ENCODE measurements at regions of chr1 and their contacts with region 1.

Region 1: GRCh38 chr1:40404670-40405462 is 31.3 kb downstream of the SMAP2 start:
- DNase-seq: peak; percentile 70
- H3K4me3 ChIP-seq: no peak overlapping the region
- H3K27ac ChIP-seq: no peak overlapping the region
- H3K4me1 ChIP-seq: peaks cover 18% of the 10 kb centered on the region
- H3K27me3 ChIP-seq: no peaks in the 10 kb centered on the region
- CTCF ChIP-seq: peak; percentile 86

Region 2: DNA sequence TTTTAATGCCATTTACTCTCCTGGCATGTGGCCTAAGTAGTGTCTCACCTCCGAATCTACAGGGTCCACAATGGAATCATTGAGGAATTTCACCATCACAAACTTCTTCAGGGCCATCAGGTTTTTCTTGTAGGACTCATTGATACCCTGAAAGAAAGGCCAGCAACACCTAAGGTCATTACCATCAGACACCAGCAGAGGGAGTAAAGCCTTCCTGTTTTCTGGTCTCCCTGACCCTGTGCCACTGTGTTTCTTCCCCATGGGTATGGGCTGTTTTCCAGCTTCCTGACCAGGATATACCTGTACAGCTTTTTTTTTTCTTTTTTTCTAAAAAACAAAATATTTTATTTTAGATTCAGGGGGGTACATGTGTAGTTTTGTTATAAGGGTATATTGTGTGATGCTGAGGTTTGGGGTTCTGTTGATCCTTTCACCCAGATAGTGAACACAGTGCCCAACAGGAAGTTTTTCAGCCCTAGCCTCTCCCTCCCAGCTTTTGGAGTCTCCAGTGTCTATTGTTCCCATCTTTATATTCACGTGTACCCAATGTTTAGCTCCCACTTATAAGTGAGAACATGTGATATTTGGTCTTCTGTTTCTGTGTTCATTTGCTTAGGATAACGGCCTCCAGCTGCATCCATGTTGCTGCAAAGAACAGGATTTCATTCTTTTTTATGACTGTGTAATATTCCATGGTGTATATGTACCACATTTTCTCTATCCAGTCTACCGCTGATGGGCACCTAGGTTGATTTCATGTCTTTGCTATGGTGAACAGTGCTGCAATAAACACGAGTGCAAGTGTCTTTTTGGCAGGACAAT is 326.1 kb before region 1 on chr1:
- CTCF ChIA-PET with region 1: no interaction called
- POLR2A ChIA-PET with region 1: no interaction called
- intact Hi-C with region 1: loop called (anchors 10 kb)
- DNase-seq: peak; percentile 76
- H3K4me3 ChIP-seq: no peak overlapping the region
- H3K27ac ChIP-seq: no peak overlapping the region
- H3K4me1 ChIP-seq: no peaks in the 10 kb centered on the region
- H3K27me3 ChIP-seq: no peaks in the 10 kb centered on the region
- CTCF ChIP-seq: peak; percentile 82

Region 3: DNA sequence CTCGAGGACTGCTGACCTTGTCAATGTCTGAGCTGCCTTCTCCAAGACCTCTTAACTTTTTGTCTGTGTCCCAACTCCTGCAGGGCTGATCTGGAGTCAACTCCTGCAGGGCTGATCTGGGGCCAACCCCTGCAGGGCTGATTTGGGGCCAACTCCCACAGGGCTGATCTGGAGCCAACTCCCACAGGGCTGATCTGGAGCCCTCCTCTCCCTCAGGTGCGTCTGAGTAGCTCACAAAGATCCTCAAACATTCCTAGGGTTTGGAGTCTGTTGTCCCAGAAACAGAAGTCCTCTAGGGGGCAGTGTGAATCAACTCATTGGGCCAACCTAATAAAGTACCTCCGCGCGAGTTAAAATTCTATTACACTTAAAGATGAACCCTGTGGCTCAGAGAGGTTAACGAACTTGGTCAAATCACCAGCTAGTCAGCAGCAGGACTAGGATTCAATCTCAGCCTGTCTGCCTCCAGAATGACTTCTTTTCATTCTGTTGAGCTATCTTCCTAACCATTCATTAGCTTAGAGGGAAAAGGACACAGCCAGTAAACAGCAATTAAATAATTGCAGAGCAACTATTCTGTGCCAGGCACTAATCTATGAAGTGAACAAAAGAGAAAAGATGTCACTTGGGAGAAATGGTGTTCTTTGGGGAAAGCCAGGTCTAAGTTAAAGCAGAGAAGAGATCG is 260.8 kb before region 1 on chr1:
- CTCF ChIA-PET with region 1: interaction called, 18 read pairs
- POLR2A ChIA-PET with region 1: no interaction called
- intact Hi-C with region 1: no loop called
- DNase-seq: peak; percentile 84
- H3K4me3 ChIP-seq: no peak overlapping the region
- H3K27ac ChIP-seq: no peak overlapping the region
- H3K4me1 ChIP-seq: no peaks in the 10 kb centered on the region
- H3K27me3 ChIP-seq: peaks cover 31% of the 10 kb centered on the region
- CTCF ChIP-seq: peak; percentile 85

Region 4: DNA sequence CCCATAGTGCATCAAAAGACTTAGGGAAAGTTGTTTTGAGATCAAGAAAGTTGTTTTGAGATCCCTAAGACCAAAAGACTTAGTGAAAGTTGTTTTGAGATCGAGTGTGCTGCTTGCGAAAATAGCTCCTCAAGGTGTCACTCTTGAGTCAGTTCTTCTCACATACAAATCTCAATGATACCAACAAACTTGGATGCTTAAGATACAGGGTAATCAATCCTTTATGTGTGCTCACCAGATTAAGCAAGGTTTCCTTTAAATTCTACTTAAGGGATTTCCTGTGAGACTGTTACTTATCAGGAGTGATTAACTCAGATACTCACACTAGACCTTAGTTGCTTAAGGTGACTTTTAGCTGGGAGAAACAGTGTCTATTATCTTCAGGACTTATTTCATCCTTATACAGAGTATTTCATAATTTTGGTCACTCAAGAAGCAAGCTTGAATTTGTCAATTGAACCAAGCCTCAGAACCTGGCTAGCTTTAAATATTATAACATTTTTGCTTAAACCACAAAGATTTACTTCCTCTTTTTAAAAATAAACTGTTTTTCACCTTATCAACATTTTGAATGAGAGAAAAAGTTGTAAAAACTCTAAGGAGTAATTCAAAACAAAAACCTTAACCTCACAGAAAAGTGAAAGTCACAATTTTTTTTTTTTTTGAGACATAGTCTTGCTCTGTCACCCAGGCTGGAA is 251.6 kb before region 1 on chr1:
- CTCF ChIA-PET with region 1: interaction called, 25 read pairs
- POLR2A ChIA-PET with region 1: no interaction called
- intact Hi-C with region 1: loop called (anchors 1 kb)
- DNase-seq: peak; percentile 71
- H3K4me3 ChIP-seq: peak overlapping the region; percentile 18
- H3K27ac ChIP-seq: no peak overlapping the region
- H3K4me1 ChIP-seq: peaks cover 5% of the 10 kb centered on the region
- H3K27me3 ChIP-seq: peaks cover 2% of the 10 kb centered on the region
- CTCF ChIP-seq: peak; percentile 81

Region 5: GRCh38 chr1:40197656-40198055 is 207.2 kb before region 1 on chr1:
- CTCF ChIA-PET with region 1: no interaction called
- POLR2A ChIA-PET with region 1: no interaction called
- intact Hi-C with region 1: no loop called
- DNase-seq: no peak
- H3K4me3 ChIP-seq: no peak overlapping the region
- H3K27ac ChIP-seq: no peak overlapping the region
- H3K4me1 ChIP-seq: no peaks in the 10 kb centered on the region
- H3K27me3 ChIP-seq: no peaks in the 10 kb centered on the region
- CTCF ChIP-seq: 0 out of 2 replicates have a peak, but pooled peaks have one; percentile 19

Region 6: GRCh38 chr1:40257688-40258444 is 147.0 kb before region 1 on chr1 and contains the start of gene ZMPSTE24:
- CTCF ChIA-PET with region 1: no interaction called
- POLR2A ChIA-PET with region 1: no interaction called
- intact Hi-C with region 1: loop called (anchors 10 kb)
- DNase-seq: peak; percentile 99
- H3K4me3 ChIP-seq: peak within 1 kb of the TSS; percentile 83
- H3K27ac ChIP-seq: peak within 1 kb of the TSS; percentile 97
- H3K4me1 ChIP-seq: peaks cover 7% of the 10 kb centered on the region
- H3K27me3 ChIP-seq: no peaks in the 10 kb centered on the region
- CTCF ChIP-seq: no peak
- total RNA-seq, gene ZMPSTE24: 57.5 and 72.1 TPM in 2 replicates

Region 7: DNA sequence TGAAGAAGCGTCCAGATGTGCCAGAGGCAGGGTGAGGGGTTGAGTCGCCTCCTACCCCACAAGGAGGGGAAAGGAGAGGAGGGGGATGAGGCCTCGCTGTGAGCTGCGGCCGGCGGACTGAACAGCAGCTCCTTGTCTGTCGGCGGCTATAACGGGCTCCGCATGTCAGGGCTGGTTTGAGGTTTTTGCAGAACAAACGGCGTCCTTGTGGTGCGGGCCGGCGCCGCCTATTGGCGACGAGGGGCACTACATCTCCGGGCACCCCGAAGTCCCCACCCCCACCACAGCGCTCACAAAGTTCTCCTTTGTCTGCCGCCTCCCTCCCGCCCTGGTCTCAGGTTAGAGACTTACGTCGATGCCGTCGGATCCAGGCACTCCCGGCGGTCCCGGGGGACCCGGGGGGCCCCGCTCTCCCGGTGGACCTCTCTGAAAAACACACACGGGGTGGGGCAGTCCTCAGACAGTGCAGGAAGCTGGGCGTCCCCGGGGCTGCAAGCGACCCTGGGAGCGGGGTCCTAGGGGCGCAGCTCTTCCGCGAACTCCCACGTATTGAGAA is 89.5 kb before region 1 on chr1:
- CTCF ChIA-PET with region 1: interaction called, 3 read pairs
- POLR2A ChIA-PET with region 1: no interaction called
- intact Hi-C with region 1: loop called (anchors 5 kb)
- DNase-seq: peak; percentile 92
- H3K4me3 ChIP-seq: peak overlapping the region; percentile 56
- H3K27ac ChIP-seq: peak overlapping the region; percentile 43
- H3K4me1 ChIP-seq: peaks cover 12% of the 10 kb centered on the region
- H3K27me3 ChIP-seq: no peaks in the 10 kb centered on the region
- CTCF ChIP-seq: peak; percentile 90

Region 8: DNA sequence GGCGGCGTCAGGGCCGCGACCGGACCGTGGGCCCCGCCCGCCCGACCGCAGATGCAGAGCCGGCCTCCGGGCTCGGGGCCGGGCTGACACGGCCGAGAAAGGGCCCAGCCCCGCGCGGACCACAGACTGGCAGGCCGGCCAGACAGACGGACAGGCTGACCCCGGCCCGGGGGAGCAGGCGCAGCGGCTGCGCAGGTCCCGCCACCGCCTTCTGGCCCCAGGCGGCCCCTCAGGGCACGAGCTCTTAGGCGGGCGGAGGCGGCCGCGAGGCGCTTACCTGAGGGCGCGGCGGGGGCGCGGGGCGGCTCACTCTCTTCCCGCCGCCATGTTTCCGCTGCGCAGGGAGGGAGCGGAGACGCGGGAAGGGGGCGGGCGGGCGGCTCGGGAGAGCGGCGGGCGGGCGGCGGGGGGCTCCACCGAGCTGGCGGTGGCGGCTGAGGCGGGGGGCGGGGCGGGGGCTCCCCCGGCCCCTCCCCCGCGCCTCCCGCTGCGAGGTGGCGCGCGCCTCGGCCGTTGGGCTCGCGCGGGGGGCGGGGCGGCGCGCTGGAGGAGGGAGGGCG is 837.0 kb after region 1 on chr1 and contains the start of gene SCMH1:
- CTCF ChIA-PET with region 1: no interaction called
- POLR2A ChIA-PET with region 1: no interaction called
- intact Hi-C with region 1: no loop called
- DNase-seq: peak; percentile 72
- H3K4me3 ChIP-seq: peak within 1 kb of the TSS; percentile 78
- H3K27ac ChIP-seq: peak within 1 kb of the TSS; percentile 87
- H3K4me1 ChIP-seq: peaks cover 37% of the 10 kb centered on the region
- H3K27me3 ChIP-seq: no peaks in the 10 kb centered on the region
- CTCF ChIP-seq: no peak
- total RNA-seq, gene SCMH1: 30.4 and 37.8 TPM in 2 replicates

Measured in A673 (cell line).